ENCODE measurements at regions of chr12 and their contacts with region 1.

Region 1: GRCh38 chr12:109093022-109093918 is at the start of gene ALKBH2:
- DNase-seq: peak; percentile 97
- ATAC-seq: peak; percentile 55
- H3K4me3 ChIP-seq: peak within 1 kb of the TSS; percentile 62
- H3K27ac ChIP-seq: peak within 1 kb of the TSS; percentile 27
- H3K4me1 ChIP-seq: peaks cover 39% of the 10 kb centered on the region
- H3K27me3 ChIP-seq: no peaks in the 10 kb centered on the region
- CTCF ChIP-seq: peak; percentile 93
- total RNA-seq, gene ALKBH2: 73.8 and 74.0 TPM in 2 replicates

Region 2: GRCh38 chr12:108514973-108515814 is 578.1 kb before region 1 on chr12 and contains the start of gene FICD:
- CTCF ChIA-PET with region 1: no interaction called
- POLR2A ChIA-PET with region 1: no interaction called
- intact Hi-C with region 1: loop called (anchors 1 kb)
- DNase-seq: peak; percentile 99
- ATAC-seq: peak; percentile 88
- H3K4me3 ChIP-seq: peak within 1 kb of the TSS; percentile 90
- H3K27ac ChIP-seq: no peak within 1 kb of the TSS
- H3K4me1 ChIP-seq: peaks cover 11% of the 10 kb centered on the region; the same call in 1 of the 2 replicates
- H3K27me3 ChIP-seq: no peaks in the 10 kb centered on the region
- CTCF ChIP-seq: no peak
- total RNA-seq, gene FICD: 6.4 and 18.5 TPM in 2 replicates

Region 3: DNA sequence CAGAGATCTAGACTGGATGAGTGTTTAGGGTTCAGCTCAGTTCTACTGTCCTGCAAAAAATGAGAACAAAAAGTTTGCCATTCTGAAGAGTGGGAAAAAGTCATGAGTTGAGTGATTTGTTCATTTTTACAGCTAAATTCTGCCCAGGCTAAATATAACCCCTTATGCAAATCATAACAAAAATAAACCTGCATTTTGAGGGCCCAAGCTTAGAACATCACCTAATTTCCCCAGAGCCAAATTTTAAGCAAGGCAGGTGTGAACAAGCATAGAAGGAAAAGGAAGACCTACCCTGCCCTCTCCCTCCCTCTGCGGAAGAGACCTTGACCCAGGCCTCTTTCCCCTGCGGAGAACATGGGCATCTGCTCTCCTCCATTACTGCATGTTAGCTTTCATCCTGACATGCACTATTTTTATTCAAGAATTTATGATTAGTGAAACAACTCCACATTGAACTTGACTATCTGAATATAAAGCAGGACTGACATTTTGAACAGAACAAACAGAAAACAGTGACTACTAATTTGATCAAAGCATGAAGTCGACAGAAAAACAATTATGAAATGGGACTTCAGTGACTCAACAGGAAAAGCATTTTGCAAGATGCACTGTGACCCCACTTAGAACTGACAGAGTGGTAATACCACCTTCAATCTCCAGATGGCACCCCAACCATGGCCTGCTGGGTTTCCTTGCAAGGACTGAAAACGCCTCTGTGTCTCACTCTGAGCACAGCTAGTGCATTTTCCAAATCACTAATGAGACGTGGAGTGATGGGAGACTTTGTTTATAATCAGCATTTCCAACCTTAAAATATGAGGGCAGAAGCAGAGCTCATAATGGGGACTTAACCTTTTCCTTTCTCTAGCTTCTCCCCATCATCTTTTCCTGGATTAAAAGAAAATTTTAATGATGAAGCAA is 428.7 kb before region 1 on chr12:
- CTCF ChIA-PET with region 1: no interaction called
- POLR2A ChIA-PET with region 1: no interaction called
- intact Hi-C with region 1: loop called (anchors 2 kb)
- DNase-seq: peak; percentile 98
- ATAC-seq: peak; percentile 86
- H3K4me3 ChIP-seq: no peak overlapping the region
- H3K27ac ChIP-seq: peak overlapping the region; percentile 13; the same call in 1 of the 2 replicates
- H3K4me1 ChIP-seq: peaks cover 22% of the 10 kb centered on the region
- H3K27me3 ChIP-seq: no peaks in the 10 kb centered on the region
- CTCF ChIP-seq: peak; percentile 96

Region 4: GRCh38 chr12:108838194-108839017 is 254.9 kb before region 1 on chr12:
- CTCF ChIA-PET with region 1: no interaction called
- POLR2A ChIA-PET with region 1: no interaction called
- intact Hi-C with region 1: loop called (anchors 5 kb)
- DNase-seq: peak; percentile 99
- ATAC-seq: peak; percentile 97
- H3K4me3 ChIP-seq: peak overlapping the region; percentile 23; the same call in 1 of the 2 replicates
- H3K27ac ChIP-seq: peak overlapping the region; percentile 92
- H3K4me1 ChIP-seq: peaks cover 36% of the 10 kb centered on the region
- H3K27me3 ChIP-seq: no peaks in the 10 kb centered on the region
- CTCF ChIP-seq: no peak

Region 5: DNA sequence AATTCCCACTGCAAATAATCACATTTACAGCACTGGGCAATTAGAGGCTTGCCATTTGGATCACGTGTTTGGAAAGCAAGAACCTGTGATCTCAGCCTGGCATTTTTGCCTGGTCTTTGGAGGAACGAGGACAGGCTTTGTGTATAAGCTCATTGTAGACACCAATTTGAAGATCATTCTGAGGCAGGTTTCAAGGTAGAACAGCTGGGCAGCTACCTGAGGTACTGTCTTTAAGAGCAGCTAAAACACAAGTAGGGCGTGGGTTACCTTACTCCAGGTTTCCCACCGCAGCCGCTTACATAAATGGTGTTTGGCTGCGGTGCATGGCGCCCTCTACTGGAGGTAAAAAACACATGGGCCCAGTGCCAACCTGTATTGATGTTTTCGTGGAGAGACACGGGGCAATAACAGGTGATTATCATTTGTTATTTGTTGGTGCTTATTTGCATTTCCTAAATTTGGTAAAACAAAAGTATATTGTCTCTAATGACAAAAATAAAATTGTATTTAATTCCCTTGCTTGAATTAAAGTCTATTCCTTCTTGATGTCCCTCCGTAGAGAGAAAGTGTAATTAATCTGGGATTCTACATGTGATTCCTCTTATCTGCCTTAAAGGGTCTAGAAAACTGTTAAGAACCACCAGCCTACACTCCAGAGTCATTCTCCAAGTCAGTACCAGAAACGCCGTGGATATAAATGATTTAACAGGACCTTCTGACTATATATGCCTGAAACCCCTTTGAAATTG is 142.1 kb before region 1 on chr12:
- CTCF ChIA-PET with region 1: no interaction called
- POLR2A ChIA-PET with region 1: no interaction called
- intact Hi-C with region 1: loop called (anchors 1 kb)
- DNase-seq: peak; percentile 91
- ATAC-seq: peak; percentile 77
- H3K4me3 ChIP-seq: peak overlapping the region; percentile 36; the same call in 1 of the 2 replicates
- H3K27ac ChIP-seq: no peak overlapping the region
- H3K4me1 ChIP-seq: no peaks in the 10 kb centered on the region
- H3K27me3 ChIP-seq: peaks cover 16% of the 10 kb centered on the region; the same call in 1 of the 2 replicates
- CTCF ChIP-seq: peak; percentile 97

Region 6: DNA sequence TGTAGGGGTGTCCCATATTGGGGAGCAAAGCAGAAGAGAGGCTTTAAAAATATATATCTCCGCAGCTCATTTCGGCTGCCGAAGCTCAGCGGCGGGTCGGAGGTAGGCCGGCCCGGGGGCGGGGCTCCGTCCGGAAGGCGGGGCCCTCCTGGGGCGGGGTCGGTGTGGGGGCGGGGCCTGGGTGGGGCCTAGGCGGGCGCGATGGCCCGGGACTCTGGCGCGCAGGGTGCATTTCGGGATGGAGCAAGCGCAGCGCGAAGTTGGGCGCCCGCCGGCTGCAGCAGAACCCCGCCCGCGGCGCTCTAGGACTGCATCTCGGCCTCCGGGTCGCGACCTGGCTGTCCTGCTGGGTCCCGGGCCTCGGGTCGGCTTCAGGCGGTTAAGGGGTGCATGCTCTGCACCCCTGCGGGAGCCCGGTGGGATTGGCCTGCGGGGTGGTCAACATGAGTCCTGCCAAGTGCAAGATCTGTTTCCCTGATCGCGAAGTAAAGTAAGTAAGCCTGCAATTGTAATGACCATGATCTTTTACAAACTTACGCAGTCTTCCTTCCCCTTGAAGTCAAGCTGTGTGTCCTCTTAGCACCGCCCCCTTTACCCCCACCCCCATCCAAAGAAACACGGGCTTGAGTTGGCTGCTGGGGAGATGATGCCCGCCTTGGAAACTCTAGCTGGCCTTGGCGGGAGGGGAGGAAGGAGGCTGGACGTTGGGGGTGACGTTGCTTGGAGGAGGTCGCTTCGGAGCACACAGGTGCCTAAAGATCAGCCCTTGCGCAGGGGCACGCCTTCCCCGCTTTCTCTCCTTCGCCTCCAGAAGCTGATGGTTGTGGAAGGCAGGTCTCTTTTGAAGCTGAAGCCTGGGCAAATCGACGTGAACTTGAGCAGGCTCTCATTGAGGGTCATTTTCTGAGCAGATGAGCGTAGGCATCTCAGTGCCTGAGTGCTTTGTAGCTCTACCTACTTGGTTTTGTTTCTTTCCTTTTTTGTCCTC is 61.5 kb after region 1 on chr12:
- CTCF ChIA-PET with region 1: no interaction called
- POLR2A ChIA-PET with region 1: interaction called, 10 read pairs
- intact Hi-C with region 1: no loop called
- DNase-seq: peak; percentile 94
- ATAC-seq: peak; percentile 89
- H3K4me3 ChIP-seq: peak overlapping the region; percentile 89
- H3K27ac ChIP-seq: peak overlapping the region; percentile 47
- H3K4me1 ChIP-seq: peaks cover 12% of the 10 kb centered on the region
- H3K27me3 ChIP-seq: no peaks in the 10 kb centered on the region
- CTCF ChIP-seq: no peak

Region 7: DNA sequence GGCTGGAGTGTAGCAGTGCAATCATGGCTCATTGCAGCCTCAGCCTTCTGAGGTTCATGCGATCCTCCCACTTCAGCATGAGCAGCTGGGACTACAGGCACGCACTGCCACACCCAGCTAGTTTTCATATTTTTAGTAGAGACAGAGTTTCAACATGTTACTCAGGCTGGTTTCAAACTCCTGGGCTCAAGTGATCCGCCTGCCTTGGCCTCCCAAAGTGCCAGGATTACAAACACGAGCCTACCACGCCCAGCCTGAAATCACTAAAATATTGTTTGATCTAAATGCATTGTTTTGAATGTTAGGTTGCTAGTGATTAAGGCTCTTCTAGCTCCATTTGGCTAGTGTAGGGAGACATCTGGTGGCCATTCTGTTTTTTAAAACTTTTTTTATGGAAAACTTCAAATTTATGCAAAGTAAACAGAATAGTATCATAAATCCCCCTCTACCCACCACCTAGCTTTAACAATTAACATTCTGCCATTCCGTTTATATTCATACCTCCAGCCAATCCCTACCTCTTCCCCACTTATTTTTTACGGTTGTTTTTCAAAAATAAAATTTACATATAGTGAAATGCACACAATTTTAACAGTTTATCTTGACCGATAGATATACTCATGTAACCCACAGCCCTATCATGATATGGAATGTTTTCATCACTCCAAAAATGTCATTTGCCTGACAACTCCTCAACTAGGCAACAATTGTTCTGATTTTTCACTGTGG is 292.2 kb after region 1 on chr12:
- CTCF ChIA-PET with region 1: no interaction called
- POLR2A ChIA-PET with region 1: no interaction called
- intact Hi-C with region 1: loop called (anchors 1 kb)
- DNase-seq: peak; percentile 81
- ATAC-seq: peak; percentile 79
- H3K4me3 ChIP-seq: peak overlapping the region; percentile 35; the same call in 1 of the 2 replicates
- H3K27ac ChIP-seq: no peak overlapping the region
- H3K4me1 ChIP-seq: no peaks in the 10 kb centered on the region
- H3K27me3 ChIP-seq: peaks cover 21% of the 10 kb centered on the region
- CTCF ChIP-seq: peak; percentile 80

Measured in PC-3 (cell line).